ENCODE measurements at regions of chr1 and their contacts with region 1.

Region 1: DNA sequence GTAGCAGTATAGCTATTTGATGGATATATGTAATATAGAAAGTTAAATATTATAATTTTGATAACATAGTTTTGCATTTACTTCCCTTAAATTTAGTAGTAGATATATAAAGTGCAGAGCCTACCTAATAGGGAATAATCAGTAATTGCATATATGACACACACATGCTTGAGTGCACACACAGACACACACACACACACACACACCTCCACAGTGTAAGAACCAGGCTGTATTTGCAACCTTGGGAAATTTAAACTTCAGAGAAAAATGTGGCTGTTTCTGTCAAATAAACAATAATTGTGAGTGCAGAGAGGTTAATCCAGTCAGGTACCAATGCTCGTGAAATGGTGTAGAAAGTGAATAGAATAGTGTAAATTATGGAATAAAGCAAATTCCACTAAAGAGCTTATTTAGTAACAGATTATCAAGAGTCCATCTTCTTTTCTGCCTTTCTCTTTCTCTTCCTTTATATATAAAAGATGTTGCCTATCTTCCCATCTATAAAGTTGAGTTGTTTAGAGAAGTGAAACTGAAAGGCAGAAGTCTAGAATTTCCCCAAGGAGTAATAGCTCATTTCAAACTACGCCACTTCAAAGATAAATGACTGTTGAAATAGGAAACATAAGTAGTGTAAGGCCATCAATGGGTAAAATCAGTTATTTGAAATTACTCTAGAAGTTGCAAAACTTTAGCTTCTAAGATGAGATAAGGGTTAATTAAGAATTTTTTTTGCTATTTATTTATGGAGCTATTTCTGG is 273.7 kb downstream of the SRGAP2C start:
- DNase-seq: peak in 3 of 14 experiments; percentile 66 to 76 (median 70)
- ATAC-seq: peak; percentile 55
- H3K4me3 ChIP-seq: peak overlapping the region; percentile 36
- H3K4me3 Mint-ChIP-seq: peak overlapping the region; percentile 84
- H3K27ac ChIP-seq: peak overlapping the region in 1 of 2 donors; percentile 43
- H3K27ac Mint-ChIP-seq: peak overlapping the region; percentile 76
- H3K4me1 ChIP-seq: no peaks in the 10 kb centered on the region
- H3K4me1 Mint-ChIP-seq: peaks cover 14% of the 10 kb centered on the region
- H3K27me3 ChIP-seq: no peaks in the 10 kb centered on the region
- H3K27me3 Mint-ChIP-seq: no peaks in the 10 kb centered on the region
- CTCF ChIP-seq: no peak

Region 2: GRCh38 chr1:121472017-121472416 is 13.5 kb after region 1 on chr1:
- CTCF ChIA-PET with region 1: no interaction called
- POLR2A ChIA-PET with region 1: no interaction called
- intact Hi-C with region 1: loop called in 1 of 2 experiments (anchors 2 kb)
- DNase-seq: no peak
- ATAC-seq: no peak
- H3K4me3 ChIP-seq: no peak overlapping the region
- H3K4me3 Mint-ChIP-seq: no peak overlapping the region
- H3K27ac ChIP-seq: no peak overlapping the region
- H3K27ac Mint-ChIP-seq: no peak overlapping the region
- H3K4me1 ChIP-seq: no peaks in the 10 kb centered on the region
- H3K4me1 Mint-ChIP-seq: no peaks in the 10 kb centered on the region
- H3K27me3 ChIP-seq: no peaks in the 10 kb centered on the region
- H3K27me3 Mint-ChIP-seq: no peaks in the 10 kb centered on the region
- CTCF ChIP-seq: no peak

Region 3: GRCh38 chr1:121483961-121484424 is 25.5 kb after region 1 on chr1:
- CTCF ChIA-PET with region 1: no interaction called
- POLR2A ChIA-PET with region 1: no interaction called
- intact Hi-C with region 1: no loop called
- DNase-seq: no peak
- ATAC-seq: no peak
- H3K4me3 ChIP-seq: no peak overlapping the region
- H3K4me3 Mint-ChIP-seq: no peak overlapping the region
- H3K27ac ChIP-seq: no peak overlapping the region
- H3K27ac Mint-ChIP-seq: no peak overlapping the region
- H3K4me1 ChIP-seq: no peaks in the 10 kb centered on the region
- H3K4me1 Mint-ChIP-seq: no peaks in the 10 kb centered on the region
- H3K27me3 ChIP-seq: no peaks in the 10 kb centered on the region
- H3K27me3 Mint-ChIP-seq: no peaks in the 10 kb centered on the region
- CTCF ChIP-seq: no peak

Region 4: DNA sequence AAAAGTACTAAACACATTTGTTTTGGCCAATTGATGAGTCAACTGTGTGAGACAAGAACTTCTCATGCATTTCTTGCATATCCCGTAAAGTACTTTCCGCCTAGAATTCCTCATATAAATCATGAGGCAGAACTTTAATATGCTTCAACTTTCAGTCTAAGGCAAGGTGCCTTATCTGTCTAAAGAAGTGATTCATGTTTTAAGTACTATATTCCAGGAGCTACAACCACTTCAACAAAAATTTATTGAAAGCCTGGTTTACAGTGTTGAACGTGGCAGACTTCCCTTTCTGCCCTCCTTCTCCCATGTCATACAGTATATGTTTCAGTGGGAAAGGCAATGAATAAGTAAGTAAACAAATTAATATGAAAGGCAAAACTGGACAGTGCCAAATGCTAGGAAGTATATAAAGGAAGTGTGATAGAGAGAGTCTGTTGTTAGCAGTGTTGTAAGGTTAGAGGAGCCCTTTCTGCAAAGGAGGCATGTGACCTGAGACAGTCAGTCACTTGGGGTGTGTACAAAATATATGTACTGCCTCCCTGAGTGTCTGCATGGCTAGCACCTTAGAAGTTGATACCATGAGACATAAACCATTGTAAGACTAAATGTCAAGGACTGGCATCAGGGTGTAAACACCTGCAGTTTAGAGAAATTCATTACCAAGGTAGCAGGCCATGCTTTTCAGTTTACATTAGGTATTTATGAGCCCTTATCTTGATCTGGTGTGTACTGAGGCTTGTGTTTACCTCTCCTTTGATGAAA is 88.5 kb after region 1 on chr1:
- CTCF ChIA-PET with region 1: no interaction called
- POLR2A ChIA-PET with region 1: no interaction called
- intact Hi-C with region 1: loop called in 1 of 2 experiments (anchors 10 kb)
- DNase-seq: peak in 3 of 14 experiments; percentile 5 to 28 (median 16)
- ATAC-seq: peak; percentile 40
- H3K4me3 ChIP-seq: no peak overlapping the region
- H3K4me3 Mint-ChIP-seq: no peak overlapping the region
- H3K27ac ChIP-seq: no peak overlapping the region
- H3K27ac Mint-ChIP-seq: peak overlapping the region; percentile 19
- H3K4me1 ChIP-seq: peaks cover 11% of the 10 kb centered on the region
- H3K4me1 Mint-ChIP-seq: peaks cover 61% of the 10 kb centered on the region
- H3K27me3 ChIP-seq: no peaks in the 10 kb centered on the region
- H3K27me3 Mint-ChIP-seq: no peaks in the 10 kb centered on the region
- CTCF ChIP-seq: no peak

Measured in CD4-positive, alpha-beta T cell (primary cell).